ENCODE measurements at regions of chr2 and their contacts with region 1.

Region 1: GRCh38 chr2:55617175-55618024 is at the start of gene PPP4R3B:
- DNase-seq: peak; percentile 96 to 99
- ATAC-seq: peak; percentile 86 to 97 (median 87)
- H3K4me3 ChIP-seq: peak within 1 kb of the TSS; percentile 98
- H3K4me3 Mint-ChIP-seq: no peak within 1 kb of the TSS
- H3K27ac ChIP-seq: peak within 1 kb of the TSS; percentile 98
- H3K27ac Mint-ChIP-seq: no peak within 1 kb of the TSS
- H3K4me1 ChIP-seq: peaks cover 26% of the 10 kb centered on the region
- H3K4me1 Mint-ChIP-seq: peaks cover 30 to 44% of the 10 kb centered on the region in 2 donors
- H3K27me3 ChIP-seq: no peaks in the 10 kb centered on the region
- H3K27me3 Mint-ChIP-seq: no peaks in the 10 kb centered on the region
- CTCF ChIP-seq: no peak
- total RNA-seq, gene PPP4R3B: 65.1 to 97.9 (median 84.9) TPM

Region 2: DNA sequence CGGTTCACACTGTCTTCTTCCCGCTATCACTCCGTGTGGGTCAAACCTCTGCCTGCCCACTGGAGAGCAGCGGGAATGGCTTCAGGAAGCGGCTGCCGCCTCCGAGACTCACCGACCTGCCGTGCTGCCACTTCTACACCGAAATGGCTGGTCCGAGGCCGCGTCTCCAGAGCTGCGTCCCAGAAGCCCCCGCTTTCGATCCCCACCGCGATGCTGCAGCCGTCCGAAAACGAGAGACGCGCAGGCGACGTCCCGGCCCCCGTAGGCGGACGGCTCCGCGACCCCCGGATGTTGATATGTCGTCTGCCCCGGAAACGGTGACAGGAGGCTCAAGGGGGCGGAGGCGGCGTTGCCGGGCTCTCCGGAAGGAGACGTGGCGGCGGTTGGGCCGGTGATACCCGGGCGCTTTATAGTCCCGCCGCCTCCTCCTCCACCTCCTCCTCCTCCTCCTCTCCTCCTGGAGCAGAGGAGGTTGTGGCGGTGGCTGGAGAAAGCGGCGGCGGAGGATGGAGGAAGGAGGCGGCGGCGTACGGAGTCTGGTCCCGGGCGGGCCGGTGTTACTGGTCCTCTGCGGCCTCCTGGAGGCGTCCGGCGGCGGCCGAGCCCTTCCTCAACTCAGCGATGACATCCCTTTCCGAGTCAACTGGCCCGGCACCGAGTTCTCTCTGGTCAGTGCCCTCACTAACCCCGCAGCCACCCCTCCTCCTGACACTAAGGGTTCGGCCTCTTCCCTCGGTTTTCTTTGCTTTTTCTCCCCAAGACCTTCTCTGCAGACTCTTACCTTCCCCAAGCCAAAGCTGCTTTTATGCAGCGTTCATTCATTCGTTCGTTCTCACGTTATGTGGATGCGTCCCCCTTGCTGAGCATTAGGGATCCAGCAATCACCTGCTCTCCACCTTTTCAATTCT is 1830.4 kb before region 1 on chr2 and contains the starts of genes ASB3 and ERLEC1:
- intact Hi-C with region 1: loop called (anchors 5 kb)
- DNase-seq: peak; percentile 86 to 93
- ATAC-seq: peak; percentile 88 to 96 (median 94)
- H3K4me3 ChIP-seq: peak within 1 kb of the TSS; percentile 85
- H3K4me3 Mint-ChIP-seq: peak within 1 kb of the TSS; percentile 95
- H3K27ac ChIP-seq: peak within 1 kb of the TSS; percentile 82
- H3K27ac Mint-ChIP-seq: peak within 1 kb of the TSS; percentile 94 to 96
- H3K4me1 ChIP-seq: peaks cover 12% of the 10 kb centered on the region
- H3K4me1 Mint-ChIP-seq: peaks cover 42 to 45% of the 10 kb centered on the region in 2 donors
- H3K27me3 ChIP-seq: no peaks in the 10 kb centered on the region
- H3K27me3 Mint-ChIP-seq: no peaks in the 10 kb centered on the region
- CTCF ChIP-seq: no peak
- total RNA-seq, gene ASB3: 27.9 to 37.0 (median 29.6) TPM
- total RNA-seq, gene ERLEC1: 19.7 to 27.1 (median 21.7) TPM

Region 3: DNA sequence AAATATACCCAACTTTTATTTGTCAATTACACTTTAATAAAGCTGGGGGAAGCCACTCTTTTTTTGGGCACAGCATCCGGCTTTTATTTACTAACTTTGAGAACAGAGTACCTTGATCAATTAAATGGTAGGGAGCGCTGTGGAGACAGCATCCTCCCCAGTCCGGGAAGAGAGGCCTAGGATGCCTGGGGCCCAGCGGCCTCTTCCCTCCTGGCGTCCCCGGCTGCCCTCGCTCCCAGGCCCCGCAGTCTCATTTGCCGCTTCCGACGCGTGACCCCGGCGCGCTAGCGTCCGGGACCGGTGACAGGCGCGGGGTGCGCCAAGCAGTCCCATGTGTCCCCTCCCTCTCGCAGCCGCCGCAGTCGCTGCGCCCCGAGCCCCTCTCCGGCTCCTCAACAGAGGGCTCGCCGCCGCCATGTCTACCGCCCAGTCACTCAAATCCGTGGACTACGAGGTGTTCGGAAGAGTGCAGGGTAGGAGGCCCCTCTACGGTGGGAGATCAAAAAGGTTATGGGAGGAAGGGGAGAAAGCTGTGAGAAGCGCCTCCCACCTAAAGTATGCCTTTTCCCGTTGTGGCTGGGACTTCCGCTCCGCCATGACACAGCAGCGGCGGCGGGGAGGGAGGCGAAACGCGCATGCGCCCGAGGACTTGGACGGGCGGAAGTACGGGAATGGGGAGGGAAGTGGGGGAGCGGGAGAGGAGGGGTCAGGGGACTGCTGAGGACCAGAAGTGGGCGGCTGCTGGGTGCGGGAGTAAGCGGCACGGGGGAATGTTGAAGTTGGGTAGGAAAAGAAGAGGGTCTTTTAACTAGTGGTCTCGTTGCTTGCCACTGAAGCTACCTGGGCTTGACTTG is 1501.9 kb before region 1 on chr2 and contains the start of gene ACYP2:
- intact Hi-C with region 1: loop called (anchors 5 kb)
- DNase-seq: peak; percentile 87 to 96
- ATAC-seq: peak; percentile 86 to 90 (median 86)
- H3K4me3 ChIP-seq: peak within 1 kb of the TSS; percentile 92
- H3K4me3 Mint-ChIP-seq: peak within 1 kb of the TSS; percentile 94
- H3K27ac ChIP-seq: peak within 1 kb of the TSS; percentile 98
- H3K27ac Mint-ChIP-seq: peak within 1 kb of the TSS; percentile 97 to 99
- H3K4me1 ChIP-seq: peaks cover 7% of the 10 kb centered on the region
- H3K4me1 Mint-ChIP-seq: peaks cover 9 to 15% of the 10 kb centered on the region in 2 donors
- H3K27me3 ChIP-seq: no peaks in the 10 kb centered on the region
- H3K27me3 Mint-ChIP-seq: peaks cover 4 to 5% of the 10 kb centered on the region in 2 donors
- CTCF ChIP-seq: no peak
- total RNA-seq, gene ACYP2: 14.3 to 18.1 (median 16.7) TPM

Region 4: DNA sequence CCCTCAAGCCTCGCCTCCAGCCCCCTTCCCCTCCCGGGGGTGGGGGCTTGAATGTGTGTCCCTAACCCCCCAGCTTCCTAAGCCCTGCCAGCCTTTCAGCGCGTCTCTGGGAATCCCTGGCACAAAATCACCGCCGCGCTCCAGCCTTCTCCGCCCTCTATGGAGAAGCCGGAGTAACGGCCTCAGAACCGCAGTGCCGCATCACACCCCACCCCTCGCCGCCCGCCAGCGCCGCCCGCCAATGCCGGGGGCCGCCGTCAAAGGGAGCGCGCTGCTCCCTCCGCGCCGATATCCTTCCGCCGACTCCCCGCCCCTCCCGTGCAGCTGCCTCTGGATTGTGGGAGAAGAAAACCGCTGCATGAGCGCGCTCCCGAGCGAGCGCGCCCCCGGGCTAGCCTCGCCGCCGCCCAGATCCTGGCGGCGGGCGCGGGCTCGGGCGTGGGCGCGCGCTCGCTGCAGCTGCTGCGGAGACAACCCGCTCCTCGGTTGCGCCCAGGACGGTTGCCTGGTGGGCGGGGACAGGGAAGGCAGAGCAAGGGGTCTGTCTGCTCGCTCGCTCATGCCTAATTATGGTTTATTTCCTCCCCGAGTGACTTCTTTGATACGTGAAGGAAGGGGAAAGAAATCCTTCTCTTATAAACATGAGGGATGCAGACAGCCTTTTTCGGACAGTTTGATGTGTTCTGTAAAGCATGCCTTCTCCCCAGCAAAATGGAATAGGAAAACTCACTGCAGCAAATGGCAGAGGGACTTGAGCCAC is 197.5 kb before region 1 on chr2 and contains the start of gene CCDC88A:
- intact Hi-C with region 1: loop called (anchors 2 kb)
- DNase-seq: peak; percentile 72 to 95
- ATAC-seq: peak; percentile 83 to 90 (median 84)
- H3K4me3 ChIP-seq: peak within 1 kb of the TSS; percentile 78
- H3K4me3 Mint-ChIP-seq: peak within 1 kb of the TSS; percentile 88
- H3K27ac ChIP-seq: peak within 1 kb of the TSS; percentile 70
- H3K27ac Mint-ChIP-seq: peak within 1 kb of the TSS; percentile 80 to 92
- H3K4me1 ChIP-seq: peaks cover 3% of the 10 kb centered on the region
- H3K4me1 Mint-ChIP-seq: peaks cover 31 to 38% of the 10 kb centered on the region in 2 donors
- H3K27me3 ChIP-seq: no peaks in the 10 kb centered on the region
- H3K27me3 Mint-ChIP-seq: peaks cover 4 to 11% of the 10 kb centered on the region in 2 donors
- CTCF ChIP-seq: no peak
- total RNA-seq, gene CCDC88A: 20.4 to 39.0 (median 26.4) TPM

Region 5: GRCh38 chr2:55519938-55520885 is 97.2 kb before region 1 on chr2:
- intact Hi-C with region 1: loop called (anchors 1 kb)
- DNase-seq: peak in 1 of 2 donors; percentile 66
- ATAC-seq: peak; percentile 5 to 7 (median 6)
- H3K4me3 ChIP-seq: peak overlapping the region; percentile 62
- H3K4me3 Mint-ChIP-seq: peak overlapping the region; percentile 100
- H3K27ac ChIP-seq: peak overlapping the region; percentile 85
- H3K27ac Mint-ChIP-seq: peak overlapping the region; percentile 90 to 100
- H3K4me1 ChIP-seq: peaks cover 16% of the 10 kb centered on the region
- H3K4me1 Mint-ChIP-seq: peaks cover 18 to 22% of the 10 kb centered on the region in 2 donors
- H3K27me3 ChIP-seq: no peaks in the 10 kb centered on the region
- H3K27me3 Mint-ChIP-seq: no peaks in the 10 kb centered on the region
- CTCF ChIP-seq: no peak

Measured in natural killer cell (primary cell).